Heart right ventricle (tissue), 16 donors: ENCODE measurements at regions of chr6 and their contacts with region 1.

Region 1: GRCh38 chr6:109382576-109383437 is 540 bp upstream of the CD164 start:
- DNase-seq: peak; percentile 92 to 93
- ATAC-seq: peak; percentile 92 to 98 (median 96)
- H3K4me3 ChIP-seq: peak overlapping the region; percentile 75 to 96 (median 86)
- H3K27ac ChIP-seq: peak overlapping the region; percentile 96 to 100 (median 99)
- H3K4me1 ChIP-seq: peaks cover 0 to 51% (median 41%) of the 10 kb centered on the region in 9 donors
- H3K27me3 ChIP-seq: no peaks in the 10 kb centered on the region
- CTCF ChIP-seq: peak; percentile 15 to 82 (median 61)

Region 2: GRCh38 chr6:108558372-108559096 is 824.3 kb before region 1 on chr6:
- intact Hi-C with region 1: loop called in 1 of 10 experiments (anchors 10 kb)
- DNase-seq: peak; percentile 98
- ATAC-seq: peak; percentile 71 to 85 (median 80)
- H3K4me3 ChIP-seq: peak overlapping the region; percentile 70 to 97 (median 93)
- H3K27ac ChIP-seq: peak overlapping the region; percentile 96 to 100 (median 99)
- H3K4me1 ChIP-seq: peaks cover 0 to 47% (median 32%) of the 10 kb centered on the region in 9 donors
- H3K27me3 ChIP-seq: no peaks in the 10 kb centered on the region
- CTCF ChIP-seq: no peak

Region 3: DNA sequence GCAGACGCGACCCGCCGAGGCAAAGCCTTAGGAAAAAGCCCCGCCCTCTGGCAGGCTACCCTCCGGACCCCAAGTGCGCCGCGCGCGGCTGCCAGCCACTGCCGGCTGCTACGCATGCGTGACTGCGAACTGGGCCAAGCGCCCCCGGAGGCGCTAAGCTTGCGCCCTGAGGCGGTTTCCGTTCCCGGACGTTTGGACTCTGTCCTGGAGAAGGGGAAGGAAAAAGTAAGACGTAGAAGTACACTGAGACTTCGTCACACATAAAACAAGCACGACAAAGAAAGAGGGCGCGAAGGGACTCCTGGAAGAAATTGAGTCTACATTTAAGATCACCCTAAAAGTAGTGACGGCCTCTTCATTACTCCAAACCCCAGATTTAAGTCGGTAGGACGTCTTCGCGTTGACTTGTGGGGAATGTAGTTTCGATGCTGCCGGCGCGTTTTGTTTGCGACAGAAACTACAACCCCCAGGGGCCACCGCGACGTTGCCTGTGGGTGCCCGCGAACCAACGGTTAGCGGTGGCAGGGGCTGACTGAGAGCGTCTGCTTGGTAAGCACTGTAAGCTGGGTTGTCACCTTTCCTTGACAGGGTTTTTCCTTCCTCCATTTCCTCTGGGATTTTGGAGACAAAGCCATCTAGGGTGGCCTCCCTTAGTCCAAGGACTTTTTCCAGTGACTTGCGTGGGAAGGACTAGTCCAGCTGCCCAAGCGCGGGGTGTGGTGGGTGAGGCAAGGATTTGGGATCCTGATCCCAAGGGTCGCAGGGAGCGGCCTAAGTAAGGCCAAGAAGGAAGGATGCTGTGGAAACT is 287.6 kb before region 1 on chr6 and contains the start of gene CEP57L1:
- intact Hi-C with region 1: loop called in 5 of 10 experiments (anchors 1 to 10 kb)
- DNase-seq: peak; percentile 98
- ATAC-seq: peak; percentile 71 to 94 (median 83)
- H3K4me3 ChIP-seq: peak within 1 kb of the TSS; percentile 59 to 98 (median 73)
- H3K27ac ChIP-seq: peak within 1 kb of the TSS; percentile 91 to 100 (median 99)
- H3K4me1 ChIP-seq: peaks cover 0 to 49% (median 38%) of the 10 kb centered on the region in 9 donors
- H3K27me3 ChIP-seq: no peaks in the 10 kb centered on the region
- CTCF ChIP-seq: peak in 2 of 9 donors; percentile 18 to 22
- total RNA-seq, gene CEP57L1: 6.0 to 11.4 (median 9.6) TPM

Region 4: DNA sequence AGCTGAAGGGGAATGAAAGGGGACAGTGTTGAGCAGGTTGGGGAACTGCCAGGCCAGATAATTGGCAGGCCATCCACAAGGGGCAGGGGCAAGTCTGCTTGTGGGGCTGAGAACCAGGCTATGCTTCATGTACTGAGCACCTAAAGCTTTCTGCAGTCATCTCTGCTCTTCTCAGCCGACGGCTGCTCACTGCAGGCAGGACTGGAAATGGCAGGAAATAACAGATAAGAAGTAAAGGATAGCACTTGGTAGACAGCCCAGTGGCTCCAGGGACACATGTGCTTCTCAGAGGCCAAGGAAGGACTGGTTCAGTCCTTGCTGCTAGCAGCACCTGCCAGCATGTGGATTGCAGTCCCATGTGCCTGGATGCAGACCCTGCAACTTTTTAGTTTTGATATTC is 90.4 kb before region 1 on chr6:
- intact Hi-C with region 1: loop called in 2 of 10 experiments (anchors 5 kb)
- DNase-seq: no peak
- ATAC-seq: peak in 6 of 8 donors; percentile 32 to 79 (median 59)
- H3K4me3 ChIP-seq: no peak overlapping the region
- H3K27ac ChIP-seq: no peak overlapping the region
- H3K4me1 ChIP-seq: peaks cover 0 to 17% (median 3%) of the 10 kb centered on the region in 9 donors
- H3K27me3 ChIP-seq: peaks cover 0 to 8% (median 0%) of the 10 kb centered on the region in 7 donors
- CTCF ChIP-seq: no peak

Region 5: DNA sequence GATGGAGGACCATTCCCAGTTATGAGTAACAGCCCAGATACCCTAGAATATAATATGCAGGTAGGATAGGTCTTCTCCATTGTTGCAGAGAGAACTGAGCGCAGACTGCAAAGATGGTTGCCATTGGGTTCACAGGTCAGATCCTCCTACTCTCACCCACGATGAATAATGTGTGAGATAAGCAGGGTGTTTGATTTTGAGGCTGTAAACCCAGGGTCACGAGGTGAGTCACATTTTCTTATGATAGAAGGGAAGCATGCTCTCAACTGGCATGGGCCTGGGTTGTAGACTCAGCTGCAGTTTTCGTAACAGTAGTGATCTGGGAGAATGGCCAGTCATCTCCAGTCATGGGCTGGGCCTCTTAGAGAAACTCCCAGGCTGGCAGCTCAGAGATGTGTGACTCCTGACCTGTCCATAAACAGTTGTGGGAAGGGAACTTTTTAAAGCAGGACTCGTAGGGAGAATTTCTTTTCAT is 74.8 kb before region 1 on chr6:
- intact Hi-C with region 1: loop called in 2 of 10 experiments (anchors 5 kb)
- DNase-seq: peak in 1 of 2 donors; percentile 51
- ATAC-seq: peak; percentile 49 to 96 (median 85)
- H3K4me3 ChIP-seq: no peak overlapping the region
- H3K27ac ChIP-seq: peak overlapping the region in 3 of 10 donors; percentile 28 to 45 (median 44)
- H3K4me1 ChIP-seq: peaks cover 0 to 21% (median 13%) of the 10 kb centered on the region in 9 donors
- H3K27me3 ChIP-seq: no peaks in the 10 kb centered on the region
- CTCF ChIP-seq: no peak

Region 6: GRCh38 chr6:109440331-109441068 is 57.7 kb after region 1 on chr6 and contains the starts of genes PPIL6 and SMPD2:
- intact Hi-C with region 1: loop called in 6 of 10 experiments (anchors 1 to 10 kb)
- DNase-seq: peak; percentile 90 to 92
- ATAC-seq: peak; percentile 90 to 97 (median 95)
- H3K4me3 ChIP-seq: peak within 1 kb of the TSS; percentile 65 to 97 (median 88)
- H3K27ac ChIP-seq: peak within 1 kb of the TSS; percentile 10 to 94 (median 86)
- H3K4me1 ChIP-seq: peaks cover 9 to 27% (median 15%) of the 10 kb centered on the region in 9 donors
- H3K27me3 ChIP-seq: no peaks in the 10 kb centered on the region
- CTCF ChIP-seq: peak; percentile 8 to 67 (median 44)
- total RNA-seq, gene PPIL6: 1.4 to 5.2 (median 3.0) TPM
- total RNA-seq, gene SMPD2: 2.1 to 6.4 (median 3.8) TPM

Region 7: DNA sequence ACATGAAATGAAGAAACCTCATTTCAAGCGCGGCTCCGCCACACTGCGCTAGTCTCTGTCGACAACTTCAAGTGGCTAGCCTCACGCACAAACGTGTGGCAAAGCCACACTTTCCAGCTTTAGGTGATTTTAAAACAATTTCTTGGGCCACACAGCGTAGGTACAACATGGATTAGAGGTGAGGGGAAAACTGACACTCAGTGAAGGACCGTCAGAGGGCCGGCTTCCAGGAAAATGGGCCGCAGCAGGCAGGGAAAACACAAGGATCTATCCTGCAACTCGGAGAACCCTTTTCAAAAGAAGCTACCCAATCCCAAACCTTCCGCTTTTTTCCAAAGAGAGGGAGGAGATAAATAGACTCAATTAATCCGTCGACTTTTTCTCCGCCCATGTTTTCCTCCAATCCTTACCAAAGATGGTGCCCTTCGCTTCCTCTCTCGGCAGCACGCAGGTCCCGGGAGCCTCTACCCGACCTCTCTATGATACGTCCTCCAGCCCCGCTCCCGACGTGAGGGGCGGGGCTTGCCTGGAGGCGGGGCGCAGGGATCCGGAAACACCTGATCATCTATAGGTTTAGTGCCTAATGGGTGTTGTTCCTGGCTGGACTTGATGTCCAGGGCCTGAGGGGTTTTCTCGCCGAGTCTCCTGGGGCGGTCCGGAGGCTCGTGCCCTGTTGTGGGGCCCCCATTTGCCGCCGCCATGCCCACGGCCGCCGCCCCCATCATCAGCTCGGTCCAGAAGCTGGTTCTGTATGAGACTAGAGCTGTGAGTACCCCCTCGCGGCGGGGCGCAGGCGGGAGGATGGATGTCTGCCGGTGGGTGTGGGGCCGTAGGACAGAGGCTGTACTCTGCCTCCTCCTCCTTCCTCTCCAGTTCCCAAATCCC is 308.2 kb after region 1 on chr6 and contains the starts of genes AK9 and FIG4:
- intact Hi-C with region 1: loop called in 2 of 10 experiments (anchors 10 kb)
- DNase-seq: peak; percentile 90 to 93
- ATAC-seq: peak; percentile 99 to 100 (median 100)
- H3K4me3 ChIP-seq: peak within 1 kb of the TSS; percentile 64 to 87 (median 78)
- H3K27ac ChIP-seq: peak within 1 kb of the TSS; percentile 34 to 93 (median 84)
- H3K4me1 ChIP-seq: peaks cover 0 to 28% (median 17%) of the 10 kb centered on the region in 9 donors
- H3K27me3 ChIP-seq: no peaks in the 10 kb centered on the region
- CTCF ChIP-seq: peak in 6 of 9 donors; percentile 16 to 53 (median 34)
- total RNA-seq, gene AK9: 6.8 to 17.0 (median 10.9) TPM
- total RNA-seq, gene FIG4: 7.6 to 13.1 (median 9.3) TPM